ENCODE measurements at regions of chr10 and their contacts with region 1.

Region 1: GRCh38 chr10:118729641-118730258 is 25.0 kb downstream of the CACUL1 start:
- DNase-seq: no peak
- ATAC-seq: peak; percentile 86
- H3K4me3 ChIP-seq: no peak overlapping the region
- H3K27ac ChIP-seq: peak overlapping the region; percentile 55
- H3K4me1 ChIP-seq: peaks cover 59% of the 10 kb centered on the region
- H3K27me3 ChIP-seq: no peaks in the 10 kb centered on the region
- CTCF ChIP-seq: no peak

Region 2: DNA sequence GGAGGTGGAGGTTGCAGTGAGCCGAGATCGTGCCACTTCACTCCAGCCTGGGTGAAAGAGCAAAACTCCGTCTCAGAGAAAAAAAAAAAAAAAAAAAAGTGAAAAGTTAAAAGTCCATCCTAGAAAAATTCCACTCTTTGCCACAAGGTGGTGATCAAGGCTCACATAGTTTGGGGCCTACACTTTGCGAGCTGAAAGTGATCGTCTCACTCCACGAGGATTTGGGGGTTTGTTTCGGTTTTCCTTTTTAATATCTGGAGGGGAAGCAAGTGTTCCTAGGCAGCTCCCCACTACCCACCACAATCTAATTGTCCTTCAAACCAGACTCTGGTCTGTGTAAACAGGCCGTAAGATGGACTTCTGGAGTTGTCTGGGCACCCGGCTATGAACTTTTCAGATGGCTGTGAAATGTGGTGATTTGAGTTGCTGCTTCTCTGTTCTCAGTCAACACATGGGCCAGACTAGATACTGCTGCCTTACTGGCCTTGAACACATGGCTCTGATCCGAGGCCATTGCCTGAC is 161.4 kb before region 1 on chr10:
- intact Hi-C with region 1: loop called (anchors 5 kb)
- DNase-seq: no peak
- ATAC-seq: peak; percentile 71
- H3K4me3 ChIP-seq: no peak overlapping the region
- H3K27ac ChIP-seq: no peak overlapping the region
- H3K4me1 ChIP-seq: no peaks in the 10 kb centered on the region
- H3K27me3 ChIP-seq: no peaks in the 10 kb centered on the region
- CTCF ChIP-seq: peak; percentile 81

Region 3: GRCh38 chr10:118669020-118669791 is 60.5 kb before region 1 on chr10:
- intact Hi-C with region 1: no loop called
- DNase-seq: no peak
- ATAC-seq: no peak
- H3K4me3 ChIP-seq: no peak overlapping the region
- H3K27ac ChIP-seq: no peak overlapping the region
- H3K4me1 ChIP-seq: peaks cover 8% of the 10 kb centered on the region
- H3K27me3 ChIP-seq: no peaks in the 10 kb centered on the region
- CTCF ChIP-seq: no peak

Region 4: GRCh38 chr10:119567978-119568377 is 838.2 kb after region 1 on chr10:
- intact Hi-C with region 1: no loop called
- DNase-seq: no peak
- ATAC-seq: no peak
- H3K4me3 ChIP-seq: no peak overlapping the region
- H3K27ac ChIP-seq: no peak overlapping the region
- H3K4me1 ChIP-seq: no peaks in the 10 kb centered on the region
- H3K27me3 ChIP-seq: no peaks in the 10 kb centered on the region
- CTCF ChIP-seq: no peak

Measured in upper lobe of right lung (tissue), 1 donor.